Endothelial cell of umbilical vein (primary cell): ENCODE measurements at regions of chrX and their contacts with region 1.

Region 1: DNA sequence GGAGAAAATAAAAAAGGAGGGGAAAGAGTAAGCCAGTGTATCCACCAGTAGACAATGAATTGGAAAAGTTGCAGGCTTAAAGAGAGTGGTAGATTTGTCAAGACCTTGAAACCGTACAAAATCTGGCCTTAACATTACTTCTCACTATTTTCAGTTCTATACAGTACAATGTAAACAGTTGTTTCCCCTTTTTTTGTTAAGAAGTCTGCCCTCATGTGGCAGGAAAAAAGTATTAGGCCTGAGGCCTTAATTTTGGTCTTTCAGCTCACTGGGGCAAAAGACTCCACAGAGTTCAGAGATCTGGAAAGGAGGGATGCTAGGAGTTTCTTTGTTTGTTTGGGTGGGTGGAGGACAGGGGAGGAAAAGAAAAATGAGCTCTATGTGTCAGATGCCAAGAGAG is 92.8 kb upstream of the CCDC160 start:
- DNase-seq: peak; percentile 4
- H3K4me3 ChIP-seq: no peak overlapping the region
- H3K27ac ChIP-seq: no peak overlapping the region
- H3K4me1 ChIP-seq: peaks cover under 1% of the 10 kb centered on the region
- H3K27me3 ChIP-seq: no peaks in the 10 kb centered on the region
- CTCF ChIP-seq: peak; percentile 7 to 25
- POLR2A ChIP-seq: no peak

Region 2: GRCh38 chrX:134026565-134027311 is 117.5 kb before region 1 on chrX:
- CTCF ChIA-PET with region 1: interaction called, 9 read pairs
- POLR2A ChIA-PET with region 1: no interaction called
- dilution Hi-C with region 1: no loop called
- intact Hi-C with region 1: loop called (anchors 1 kb)
- DNase-seq: peak; percentile 11
- H3K4me3 ChIP-seq: no peak overlapping the region
- H3K27ac ChIP-seq: no peak overlapping the region
- H3K4me1 ChIP-seq: no peaks in the 10 kb centered on the region
- H3K27me3 ChIP-seq: no peaks in the 10 kb centered on the region
- CTCF ChIP-seq: peak in 1 of 2 donors; percentile 9
- POLR2A ChIP-seq: no peak

Region 3: GRCh38 chrX:134158821-134159512 is 14.7 kb after region 1 on chrX:
- CTCF ChIA-PET with region 1: interaction called, 14 read pairs
- POLR2A ChIA-PET with region 1: no interaction called
- dilution Hi-C with region 1: no loop called
- intact Hi-C with region 1: no loop called
- DNase-seq: no peak
- H3K4me3 ChIP-seq: no peak overlapping the region
- H3K27ac ChIP-seq: no peak overlapping the region
- H3K4me1 ChIP-seq: no peaks in the 10 kb centered on the region
- H3K27me3 ChIP-seq: no peaks in the 10 kb centered on the region
- CTCF ChIP-seq: no peak
- POLR2A ChIP-seq: no peak